CD14-positive monocyte (primary cell): ENCODE measurements at regions of chr16 and their contacts with region 1.

Region 1: GRCh38 chr16:75519881-75520280 is 16.0 kb downstream of the CHST5 start:
- DNase-seq: no peak
- H3K4me3 ChIP-seq: no peak overlapping the region
- H3K4me3 Mint-ChIP-seq: no peak overlapping the region
- H3K27ac ChIP-seq: no peak overlapping the region
- H3K27ac Mint-ChIP-seq: no peak overlapping the region
- H3K4me1 ChIP-seq: peaks cover 4 to 5% of the 10 kb centered on the region in 2 donors
- H3K4me1 Mint-ChIP-seq: peaks cover 11% of the 10 kb centered on the region
- H3K27me3 ChIP-seq: peaks cover 0 to 6% of the 10 kb centered on the region in 2 donors
- H3K27me3 Mint-ChIP-seq: peaks cover 5 to 8% (median 6%) of the 10 kb centered on the region in 3 donors
- CTCF ChIP-seq: no peak

Region 2: GRCh38 chr16:75224306-75225091 is 295.4 kb before region 1 on chr16:
- intact Hi-C with region 1: no loop called
- DNase-seq: no peak
- H3K4me3 ChIP-seq: no peak overlapping the region
- H3K4me3 Mint-ChIP-seq: no peak overlapping the region
- H3K27ac ChIP-seq: no peak overlapping the region
- H3K27ac Mint-ChIP-seq: peak overlapping the region in 1 of 7 donors; percentile 57
- H3K4me1 ChIP-seq: no peaks in the 10 kb centered on the region
- H3K4me1 Mint-ChIP-seq: peaks cover 8% of the 10 kb centered on the region
- H3K27me3 ChIP-seq: peaks cover 0 to 30% of the 10 kb centered on the region in 2 donors
- H3K27me3 Mint-ChIP-seq: peaks cover 25 to 71% (median 52%) of the 10 kb centered on the region in 3 donors
- CTCF ChIP-seq: no peak

Region 3: GRCh38 chr16:75432828-75433731 is 86.8 kb before region 1 on chr16 and contains the start of gene CFDP1:
- intact Hi-C with region 1: loop called in 1 of 2 experiments (anchors 5 kb)
- DNase-seq: peak; percentile 93 to 95 (median 94)
- H3K4me3 ChIP-seq: peak within 1 kb of the TSS; percentile 74 to 91 (median 83)
- H3K4me3 Mint-ChIP-seq: peak within 1 kb of the TSS; percentile 76 to 99
- H3K27ac ChIP-seq: peak within 1 kb of the TSS; percentile 96 to 99
- H3K27ac Mint-ChIP-seq: peak within 1 kb of the TSS; percentile 95 to 100 (median 99)
- H3K4me1 ChIP-seq: peaks cover 16 to 26% of the 10 kb centered on the region in 2 donors
- H3K4me1 Mint-ChIP-seq: peaks cover 30% of the 10 kb centered on the region
- H3K27me3 ChIP-seq: no peaks in the 10 kb centered on the region
- H3K27me3 Mint-ChIP-seq: peaks cover 0 to 10% (median 3%) of the 10 kb centered on the region in 3 donors
- CTCF ChIP-seq: no peak
- polyA plus RNA-seq, gene CFDP1: 12.9 to 23.2 (median 19.0) TPM

Region 4: DNA sequence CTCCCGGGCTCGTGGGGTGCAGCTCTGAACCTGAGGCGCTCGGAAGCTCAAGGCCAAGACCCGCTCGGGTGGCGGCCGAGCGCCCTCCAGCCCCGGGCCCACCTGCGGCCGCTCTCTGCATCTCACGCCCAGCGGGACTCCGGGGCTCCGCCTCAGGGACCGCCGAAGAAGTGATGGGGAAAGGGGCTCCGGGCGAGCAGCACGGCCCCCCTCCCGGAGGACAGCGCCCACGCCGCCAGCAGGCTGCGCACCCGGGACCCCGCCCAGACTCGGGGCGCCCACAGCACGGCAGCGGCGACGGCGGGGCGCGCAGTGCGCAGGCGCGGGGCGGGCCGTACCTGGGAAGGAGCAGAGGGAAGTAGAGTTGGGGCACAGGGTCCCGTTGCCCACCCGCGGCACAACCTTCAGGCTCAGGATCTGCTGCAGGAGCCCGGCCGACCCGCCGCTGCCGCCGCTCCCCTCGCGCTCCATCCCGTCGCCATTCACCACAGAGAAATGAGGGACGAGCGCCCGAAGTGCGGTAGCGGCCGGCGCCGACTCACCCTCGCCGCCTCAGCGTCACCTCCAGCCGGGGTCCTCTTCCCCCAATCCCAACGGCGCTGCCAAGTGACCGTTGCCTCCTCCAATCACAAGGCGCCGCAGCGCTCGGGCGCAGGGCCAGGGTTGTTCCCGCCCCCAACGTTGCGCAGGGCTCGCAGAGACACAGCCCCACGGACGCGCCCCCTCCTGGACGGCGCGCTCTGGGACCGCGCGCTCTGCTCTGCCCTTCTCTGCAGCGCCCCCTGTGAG is 55.6 kb before region 1 on chr16 and contains the start of gene TMEM170A:
- intact Hi-C with region 1: loop called (anchors 2 to 5 kb)
- DNase-seq: peak; percentile 99 to 100 (median 99)
- H3K4me3 ChIP-seq: peak within 1 kb of the TSS; percentile 65 to 87 (median 78)
- H3K4me3 Mint-ChIP-seq: peak within 1 kb of the TSS; percentile 95 to 96
- H3K27ac ChIP-seq: peak within 1 kb of the TSS; percentile 88 to 94
- H3K27ac Mint-ChIP-seq: peak within 1 kb of the TSS; percentile 89 to 97 (median 96)
- H3K4me1 ChIP-seq: peaks cover 25 to 34% of the 10 kb centered on the region in 2 donors
- H3K4me1 Mint-ChIP-seq: peaks cover 29% of the 10 kb centered on the region
- H3K27me3 ChIP-seq: no peaks in the 10 kb centered on the region
- H3K27me3 Mint-ChIP-seq: peaks cover 0 to 3% (median 2%) of the 10 kb centered on the region in 3 donors
- CTCF ChIP-seq: peak; percentile 100
- polyA plus RNA-seq, gene TMEM170A: 17.9 to 31.6 (median 25.4) TPM

Region 5: GRCh38 chr16:75471723-75472633 is 47.9 kb before region 1 on chr16:
- intact Hi-C with region 1: loop called (anchors 2 to 5 kb)
- DNase-seq: peak; percentile 39 to 69 (median 63)
- H3K4me3 ChIP-seq: no peak overlapping the region
- H3K4me3 Mint-ChIP-seq: no peak overlapping the region
- H3K27ac ChIP-seq: no peak overlapping the region
- H3K27ac Mint-ChIP-seq: peak overlapping the region in 1 of 7 donors; percentile 81
- H3K4me1 ChIP-seq: peaks cover 12 to 13% of the 10 kb centered on the region in 2 donors
- H3K4me1 Mint-ChIP-seq: peaks cover 10% of the 10 kb centered on the region
- H3K27me3 ChIP-seq: no peaks in the 10 kb centered on the region
- H3K27me3 Mint-ChIP-seq: peaks cover under 1 to 4% (median 2%) of the 10 kb centered on the region in 3 donors
- CTCF ChIP-seq: peak; percentile 86

Region 6: GRCh38 chr16:75555707-75556430 is 36.0 kb after region 1 on chr16 and contains the start of gene TMEM231:
- intact Hi-C with region 1: loop called in 1 of 2 experiments (anchors 5 kb)
- DNase-seq: peak; percentile 88 to 90 (median 88)
- H3K4me3 ChIP-seq: peak within 1 kb of the TSS; percentile 38 to 85 (median 46)
- H3K4me3 Mint-ChIP-seq: peak within 1 kb of the TSS; percentile 83 to 92
- H3K27ac ChIP-seq: no peak within 1 kb of the TSS
- H3K27ac Mint-ChIP-seq: peak within 1 kb of the TSS; percentile 9 to 89 (median 76)
- H3K4me1 ChIP-seq: peaks cover 15 to 20% of the 10 kb centered on the region in 2 donors
- H3K4me1 Mint-ChIP-seq: peaks cover 12% of the 10 kb centered on the region
- H3K27me3 ChIP-seq: peaks cover 7 to 15% of the 10 kb centered on the region in 2 donors
- H3K27me3 Mint-ChIP-seq: peaks cover 16 to 35% (median 28%) of the 10 kb centered on the region in 3 donors
- CTCF ChIP-seq: no peak
- polyA plus RNA-seq, gene TMEM231: 0.27 to 0.75 (median 0.72) TPM

Region 7: DNA sequence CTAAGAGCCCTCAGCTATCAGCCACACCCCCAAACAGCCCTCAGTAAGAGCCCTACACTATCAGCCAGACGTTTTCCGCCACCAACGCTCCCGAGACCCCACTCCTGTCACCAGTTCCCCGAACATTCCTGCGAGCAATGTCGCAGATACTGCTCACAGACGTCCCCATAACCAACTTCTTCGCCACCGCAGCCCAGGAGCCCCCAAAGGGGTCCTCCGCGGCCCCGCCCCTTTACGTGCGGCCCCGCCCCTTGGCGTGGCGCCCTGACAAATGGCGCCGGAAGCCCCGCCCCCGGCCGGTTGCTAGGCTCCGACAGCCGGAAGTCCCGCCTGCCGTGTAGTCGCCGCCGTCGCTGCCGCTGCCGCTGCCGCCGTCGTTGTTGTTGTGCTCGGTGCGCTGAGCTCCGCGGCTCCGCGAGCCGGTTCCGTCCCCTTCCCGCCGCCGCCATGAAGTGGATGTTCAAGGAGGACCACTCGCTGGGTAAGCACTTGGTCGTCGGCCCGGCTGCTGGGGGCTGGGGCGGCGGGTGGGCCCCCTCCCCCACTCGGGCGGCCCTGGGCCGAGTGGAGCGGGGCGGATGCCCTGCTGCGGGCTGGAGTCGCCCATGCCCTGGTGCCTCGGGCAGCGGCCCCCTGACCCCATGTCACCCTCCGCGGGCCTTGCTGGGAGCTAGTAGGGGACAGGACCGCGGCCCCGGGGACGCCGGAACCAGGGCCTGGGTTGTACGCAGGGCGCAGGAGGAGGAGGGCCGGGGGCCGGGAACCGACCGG is 46.3 kb after region 1 on chr16 and contains the start of gene GABARAPL2:
- intact Hi-C with region 1: loop called in 1 of 2 experiments (anchors 5 kb)
- DNase-seq: peak; percentile 84 to 86 (median 85)
- H3K4me3 ChIP-seq: peak within 1 kb of the TSS; percentile 76 to 92 (median 87)
- H3K4me3 Mint-ChIP-seq: peak within 1 kb of the TSS; percentile 98 to 100
- H3K27ac ChIP-seq: peak within 1 kb of the TSS; percentile 79 to 93
- H3K27ac Mint-ChIP-seq: peak within 1 kb of the TSS; percentile 95 to 100 (median 99)
- H3K4me1 ChIP-seq: peaks cover 36 to 46% of the 10 kb centered on the region in 2 donors
- H3K4me1 Mint-ChIP-seq: peaks cover 48% of the 10 kb centered on the region
- H3K27me3 ChIP-seq: peaks cover 3 to 8% of the 10 kb centered on the region in 2 donors
- H3K27me3 Mint-ChIP-seq: peaks cover 13 to 14% (median 13%) of the 10 kb centered on the region in 3 donors
- CTCF ChIP-seq: no peak
- polyA plus RNA-seq, gene GABARAPL2: 84.3 to 302 (median 280) TPM

Region 8: GRCh38 chr16:75576384-75576811 is 56.5 kb after region 1 on chr16:
- intact Hi-C with region 1: no loop called
- DNase-seq: no peak
- H3K4me3 ChIP-seq: no peak overlapping the region
- H3K4me3 Mint-ChIP-seq: no peak overlapping the region
- H3K27ac ChIP-seq: no peak overlapping the region
- H3K27ac Mint-ChIP-seq: peak overlapping the region in 1 of 7 donors; percentile 60
- H3K4me1 ChIP-seq: peaks cover under 1 to 13% of the 10 kb centered on the region in 2 donors
- H3K4me1 Mint-ChIP-seq: peaks cover 24% of the 10 kb centered on the region
- H3K27me3 ChIP-seq: no peaks in the 10 kb centered on the region
- H3K27me3 Mint-ChIP-seq: no peaks in the 10 kb centered on the region
- CTCF ChIP-seq: no peak

Region 9: GRCh38 chr16:75622761-75623605 is 103.1 kb after region 1 on chr16 and contains the start of gene ADAT1:
- intact Hi-C with region 1: loop called in 1 of 2 experiments (anchors 5 kb)
- DNase-seq: peak; percentile 97 to 99 (median 97)
- H3K4me3 ChIP-seq: peak within 1 kb of the TSS; percentile 70 to 95 (median 93)
- H3K4me3 Mint-ChIP-seq: peak within 1 kb of the TSS; percentile 98 to 99
- H3K27ac ChIP-seq: peak within 1 kb of the TSS; percentile 92 to 93
- H3K27ac Mint-ChIP-seq: peak within 1 kb of the TSS; percentile 95 to 99 (median 97)
- H3K4me1 ChIP-seq: peaks cover 12 to 24% of the 10 kb centered on the region in 2 donors
- H3K4me1 Mint-ChIP-seq: peaks cover 29% of the 10 kb centered on the region
- H3K27me3 ChIP-seq: no peaks in the 10 kb centered on the region
- H3K27me3 Mint-ChIP-seq: no peaks in the 10 kb centered on the region
- CTCF ChIP-seq: no peak
- polyA plus RNA-seq, gene ADAT1: 16.8 to 18.9 (median 17.8) TPM

Region 10: GRCh38 chr16:75789237-75789636 is 269.4 kb after region 1 on chr16:
- intact Hi-C with region 1: no loop called
- DNase-seq: peak in 2 of 3 donors; percentile 23 to 27
- H3K4me3 ChIP-seq: no peak overlapping the region
- H3K4me3 Mint-ChIP-seq: no peak overlapping the region
- H3K27ac ChIP-seq: no peak overlapping the region
- H3K27ac Mint-ChIP-seq: no peak overlapping the region
- H3K4me1 ChIP-seq: no peaks in the 10 kb centered on the region
- H3K4me1 Mint-ChIP-seq: peaks cover 2% of the 10 kb centered on the region
- H3K27me3 ChIP-seq: peaks cover 0 to 6% of the 10 kb centered on the region in 2 donors
- H3K27me3 Mint-ChIP-seq: peaks cover 4 to 13% (median 5%) of the 10 kb centered on the region in 3 donors
- CTCF ChIP-seq: peak; percentile 88